ENCODE measurements at regions of chr15 and their contacts with region 1.

Region 1: DNA sequence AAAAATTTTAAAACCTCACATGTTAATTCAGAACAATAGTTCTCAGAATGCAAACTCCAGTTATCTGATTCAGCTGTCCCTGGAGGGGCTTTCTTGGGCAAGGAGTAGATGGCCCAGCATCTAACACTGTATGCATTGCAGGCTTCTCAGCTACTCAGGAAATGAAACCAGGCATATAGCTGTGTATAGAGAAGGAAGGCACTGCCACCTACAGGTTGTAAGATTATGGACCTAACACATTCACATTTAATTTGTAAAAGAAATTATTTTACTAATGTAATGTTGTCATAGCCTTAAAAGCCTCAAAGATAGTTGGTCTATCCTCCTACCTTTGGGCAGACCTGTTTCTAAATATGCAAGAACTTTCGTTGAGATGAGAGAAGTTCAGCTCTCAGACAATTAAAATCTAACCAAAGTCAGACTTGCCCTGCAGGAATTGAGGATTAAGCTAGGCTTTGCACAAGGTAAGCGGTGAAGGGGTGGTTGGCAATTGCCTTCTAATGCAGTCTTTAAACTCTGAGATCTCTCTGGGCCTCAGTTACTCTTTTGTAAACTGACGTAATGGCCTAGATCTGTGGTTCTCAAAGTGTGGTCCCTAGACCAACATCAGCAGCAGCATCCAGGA is 132.8 kb upstream of the SLC24A5 start:
- DNase-seq: peak in 2 of 9 experiments; percentile 24 to 45
- ATAC-seq: no peak
- H3K4me3 ChIP-seq: no peak overlapping the region
- H3K4me3 Mint-ChIP-seq: no peak overlapping the region
- H3K27ac ChIP-seq: no peak overlapping the region
- H3K27ac Mint-ChIP-seq: no peak overlapping the region
- H3K4me1 ChIP-seq: no peaks in the 10 kb centered on the region
- H3K4me1 Mint-ChIP-seq: no peaks in the 10 kb centered on the region
- H3K27me3 ChIP-seq: no peaks in the 10 kb centered on the region
- H3K27me3 Mint-ChIP-seq: no peaks in the 10 kb centered on the region
- CTCF ChIP-seq: peak; percentile 29

Region 2: DNA sequence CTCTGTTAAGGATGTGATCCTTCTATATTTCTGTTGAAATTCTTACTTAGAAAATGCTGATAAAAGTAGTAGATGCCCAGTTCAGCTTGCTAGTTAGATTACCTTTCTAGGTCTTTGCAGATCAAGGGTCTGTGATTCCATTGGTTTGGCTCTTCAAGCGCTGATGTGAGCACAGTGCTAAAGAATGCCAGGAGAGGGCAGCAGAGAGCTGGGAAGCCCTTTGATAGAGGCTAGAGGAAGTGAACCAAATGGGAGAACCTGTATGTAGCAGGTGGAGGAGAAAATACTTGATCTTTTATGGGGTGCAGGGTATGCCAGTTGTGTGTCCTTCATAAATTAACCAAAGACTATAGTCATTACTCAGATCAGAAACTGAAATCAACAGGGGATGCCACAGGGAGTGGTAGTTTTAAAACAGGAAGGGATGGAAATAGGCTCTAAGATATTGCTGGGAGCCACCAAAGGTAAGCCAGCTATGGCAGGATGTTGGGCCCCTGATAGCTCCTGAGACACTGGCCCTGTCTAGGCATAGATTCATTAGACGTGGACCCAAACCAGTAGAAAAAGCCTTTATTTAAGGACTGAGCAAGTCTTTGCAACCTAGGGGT is 1675.8 kb before region 1 on chr15:
- CTCF ChIA-PET with region 1: interaction called, 4 read pairs
- POLR2A ChIA-PET with region 1: no interaction called
- intact Hi-C with region 1: loop called in 1 of 2 experiments (anchors 5 kb)
- DNase-seq: peak in 7 of 9 experiments; percentile 15 to 61 (median 46)
- ATAC-seq: peak; percentile 57
- H3K4me3 ChIP-seq: no peak overlapping the region
- H3K4me3 Mint-ChIP-seq: no peak overlapping the region
- H3K27ac ChIP-seq: no peak overlapping the region
- H3K27ac Mint-ChIP-seq: no peak overlapping the region
- H3K4me1 ChIP-seq: no peaks in the 10 kb centered on the region
- H3K4me1 Mint-ChIP-seq: no peaks in the 10 kb centered on the region
- H3K27me3 ChIP-seq: no peaks in the 10 kb centered on the region
- H3K27me3 Mint-ChIP-seq: no peaks in the 10 kb centered on the region
- CTCF ChIP-seq: peak; percentile 65

Region 3: DNA sequence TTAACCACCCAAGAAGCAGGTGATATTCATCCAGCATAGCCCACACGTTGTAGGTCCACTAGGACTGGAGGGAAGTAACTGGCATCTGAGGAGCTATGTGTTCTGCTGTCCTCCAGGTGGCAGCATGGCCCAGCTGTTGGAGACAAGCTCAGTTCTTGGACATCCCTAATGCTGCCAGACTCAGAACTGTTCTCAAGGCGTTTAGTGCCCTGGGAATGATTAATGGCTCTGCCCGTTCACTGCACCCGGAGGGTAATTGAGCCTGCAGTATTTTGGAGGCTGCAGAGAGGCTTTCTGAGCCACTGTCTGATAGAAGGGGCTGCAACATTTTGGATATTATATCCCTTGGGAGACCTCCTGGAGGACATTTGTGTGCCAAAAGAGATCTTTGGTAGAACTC is 792.0 kb before region 1 on chr15:
- CTCF ChIA-PET with region 1: no interaction called
- POLR2A ChIA-PET with region 1: no interaction called
- intact Hi-C with region 1: loop called in 1 of 2 experiments (anchors 5 kb)
- DNase-seq: peak in 5 of 9 experiments; percentile 14 to 48 (median 28)
- ATAC-seq: no peak
- H3K4me3 ChIP-seq: no peak overlapping the region
- H3K4me3 Mint-ChIP-seq: no peak overlapping the region
- H3K27ac ChIP-seq: no peak overlapping the region
- H3K27ac Mint-ChIP-seq: no peak overlapping the region
- H3K4me1 ChIP-seq: no peaks in the 10 kb centered on the region
- H3K4me1 Mint-ChIP-seq: no peaks in the 10 kb centered on the region
- H3K27me3 ChIP-seq: no peaks in the 10 kb centered on the region
- H3K27me3 Mint-ChIP-seq: no peaks in the 10 kb centered on the region
- CTCF ChIP-seq: no peak

Region 4: DNA sequence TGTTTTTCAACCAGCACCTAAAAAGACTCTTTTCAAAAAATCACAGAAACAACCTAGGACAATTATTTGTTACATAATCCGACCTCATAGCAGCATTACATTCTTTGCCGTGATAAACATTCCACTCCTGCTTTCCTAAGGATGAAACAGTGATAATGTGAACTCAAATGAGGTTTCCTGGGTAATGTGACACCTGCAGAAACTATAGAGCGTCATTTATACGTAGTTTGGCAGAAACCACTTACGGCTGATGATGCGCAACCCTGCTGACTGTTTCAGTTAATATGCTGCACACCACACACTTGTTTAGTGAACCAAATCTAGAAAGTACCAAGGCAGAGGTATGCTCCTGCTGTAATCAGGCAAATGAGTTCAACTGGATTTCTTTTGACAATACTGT is 214.9 kb before region 1 on chr15:
- CTCF ChIA-PET with region 1: no interaction called
- POLR2A ChIA-PET with region 1: no interaction called
- intact Hi-C with region 1: no loop called
- DNase-seq: no peak
- ATAC-seq: no peak
- H3K4me3 ChIP-seq: no peak overlapping the region
- H3K4me3 Mint-ChIP-seq: no peak overlapping the region
- H3K27ac ChIP-seq: no peak overlapping the region
- H3K27ac Mint-ChIP-seq: no peak overlapping the region
- H3K4me1 ChIP-seq: no peaks in the 10 kb centered on the region
- H3K4me1 Mint-ChIP-seq: no peaks in the 10 kb centered on the region
- H3K27me3 ChIP-seq: no peaks in the 10 kb centered on the region
- H3K27me3 Mint-ChIP-seq: peaks cover 2% of the 10 kb centered on the region
- CTCF ChIP-seq: no peak

Region 5: GRCh38 chr15:47917881-47918280 is 70.1 kb before region 1 on chr15:
- CTCF ChIA-PET with region 1: no interaction called
- POLR2A ChIA-PET with region 1: no interaction called
- intact Hi-C with region 1: no loop called
- DNase-seq: no peak
- ATAC-seq: no peak
- H3K4me3 ChIP-seq: no peak overlapping the region
- H3K4me3 Mint-ChIP-seq: no peak overlapping the region
- H3K27ac ChIP-seq: no peak overlapping the region
- H3K27ac Mint-ChIP-seq: no peak overlapping the region
- H3K4me1 ChIP-seq: no peaks in the 10 kb centered on the region
- H3K4me1 Mint-ChIP-seq: no peaks in the 10 kb centered on the region
- H3K27me3 ChIP-seq: no peaks in the 10 kb centered on the region
- H3K27me3 Mint-ChIP-seq: no peaks in the 10 kb centered on the region
- CTCF ChIP-seq: no peak

Region 6: DNA sequence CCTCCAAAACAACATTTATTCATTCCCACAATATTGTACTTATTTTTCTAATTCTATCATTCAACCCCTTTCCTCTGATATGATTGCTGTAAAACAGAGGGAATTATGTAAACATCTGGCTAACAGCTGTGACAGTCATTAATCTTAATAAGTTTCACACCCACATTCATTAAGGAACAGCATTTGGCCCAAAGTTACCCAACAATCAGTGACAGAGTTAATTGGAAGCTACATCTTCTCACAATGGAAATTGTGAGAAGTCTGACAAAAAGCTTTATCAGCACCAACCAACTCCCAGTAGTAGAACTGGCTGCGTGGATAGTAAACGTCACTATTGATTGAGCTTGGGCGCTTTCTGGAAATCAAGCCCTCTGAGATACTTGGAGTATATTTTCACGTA is 33.0 kb before region 1 on chr15:
- CTCF ChIA-PET with region 1: no interaction called
- POLR2A ChIA-PET with region 1: no interaction called
- intact Hi-C with region 1: no loop called
- DNase-seq: no peak
- ATAC-seq: no peak
- H3K4me3 ChIP-seq: no peak overlapping the region
- H3K4me3 Mint-ChIP-seq: no peak overlapping the region
- H3K27ac ChIP-seq: no peak overlapping the region
- H3K27ac Mint-ChIP-seq: no peak overlapping the region
- H3K4me1 ChIP-seq: no peaks in the 10 kb centered on the region
- H3K4me1 Mint-ChIP-seq: no peaks in the 10 kb centered on the region
- H3K27me3 ChIP-seq: no peaks in the 10 kb centered on the region
- H3K27me3 Mint-ChIP-seq: no peaks in the 10 kb centered on the region
- CTCF ChIP-seq: no peak

Region 7: GRCh38 chr15:48144889-48145288 is 156.9 kb after region 1 on chr15:
- CTCF ChIA-PET with region 1: no interaction called
- POLR2A ChIA-PET with region 1: no interaction called
- intact Hi-C with region 1: no loop called
- DNase-seq: no peak
- ATAC-seq: no peak
- H3K4me3 ChIP-seq: no peak overlapping the region
- H3K4me3 Mint-ChIP-seq: no peak overlapping the region
- H3K27ac ChIP-seq: no peak overlapping the region
- H3K27ac Mint-ChIP-seq: no peak overlapping the region
- H3K4me1 ChIP-seq: no peaks in the 10 kb centered on the region
- H3K4me1 Mint-ChIP-seq: no peaks in the 10 kb centered on the region
- H3K27me3 ChIP-seq: no peaks in the 10 kb centered on the region
- H3K27me3 Mint-ChIP-seq: no peaks in the 10 kb centered on the region
- CTCF ChIP-seq: no peak